Ovary (tissue), 10 donors: ENCODE measurements at regions of chr1 and their contacts with region 1.

Region 1: DNA sequence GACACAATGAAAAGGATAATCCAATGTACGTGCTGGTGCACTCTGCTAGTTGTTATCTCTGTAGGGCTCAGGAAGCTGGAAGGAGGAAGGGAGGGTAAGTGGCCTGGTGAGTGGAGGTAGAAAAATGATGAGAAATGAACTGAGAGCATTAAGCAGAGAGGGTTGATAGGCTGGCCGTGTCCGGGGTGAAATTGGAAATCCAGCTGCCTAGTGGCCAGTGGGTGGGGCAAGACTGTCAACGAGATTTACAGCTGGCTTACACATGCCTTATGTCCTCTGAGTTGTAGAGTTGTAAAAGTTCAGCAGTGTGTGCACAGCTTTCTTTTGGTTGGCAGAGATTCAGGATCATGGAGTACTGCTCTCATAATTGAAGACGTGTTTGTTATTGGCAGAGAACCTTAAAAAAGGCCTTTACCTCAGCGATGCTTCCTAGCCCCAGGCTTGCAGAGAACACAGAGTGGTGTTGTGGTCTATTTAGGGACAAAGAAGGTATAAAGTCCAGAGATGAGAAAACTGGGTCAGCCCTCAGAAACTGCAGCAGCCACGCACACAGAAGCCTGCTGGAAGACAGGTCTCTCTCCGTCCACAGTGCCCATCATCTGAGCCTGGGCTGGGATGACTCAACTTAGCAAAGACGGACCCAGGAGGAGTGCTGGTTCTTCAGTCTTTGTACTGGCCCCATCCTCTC is 132.4 kb downstream of the EDEM3 start:
- DNase-seq: peak; percentile 76 to 88 (median 87)
- H3K4me3 ChIP-seq: no peak overlapping the region
- H3K27ac ChIP-seq: peak overlapping the region; percentile 63 to 85
- H3K4me1 ChIP-seq: peaks cover 13% of the 10 kb centered on the region
- H3K27me3 ChIP-seq: no peaks in the 10 kb centered on the region
- CTCF ChIP-seq: peak in 1 of 3 donors; percentile 8
- EP300 ChIP-seq: peak; percentile 95
- POLR2A ChIP-seq: no peak

Region 2: GRCh38 chr1:184483101-184483683 is 139.1 kb before region 1 on chr1:
- intact Hi-C with region 1: loop called in 1 of 4 experiments (anchors 10 kb)
- DNase-seq: peak in 2 of 5 donors; percentile 46 to 52
- H3K4me3 ChIP-seq: no peak overlapping the region
- H3K27ac ChIP-seq: peak overlapping the region in 1 of 2 donors; percentile 84
- H3K4me1 ChIP-seq: peaks cover 38% of the 10 kb centered on the region
- H3K27me3 ChIP-seq: no peaks in the 10 kb centered on the region
- CTCF ChIP-seq: no peak
- EP300 ChIP-seq: no peak
- POLR2A ChIP-seq: no peak